HEK293 (cell line): ENCODE measurements at regions of chrX and their contacts with region 1.

Region 1: DNA sequence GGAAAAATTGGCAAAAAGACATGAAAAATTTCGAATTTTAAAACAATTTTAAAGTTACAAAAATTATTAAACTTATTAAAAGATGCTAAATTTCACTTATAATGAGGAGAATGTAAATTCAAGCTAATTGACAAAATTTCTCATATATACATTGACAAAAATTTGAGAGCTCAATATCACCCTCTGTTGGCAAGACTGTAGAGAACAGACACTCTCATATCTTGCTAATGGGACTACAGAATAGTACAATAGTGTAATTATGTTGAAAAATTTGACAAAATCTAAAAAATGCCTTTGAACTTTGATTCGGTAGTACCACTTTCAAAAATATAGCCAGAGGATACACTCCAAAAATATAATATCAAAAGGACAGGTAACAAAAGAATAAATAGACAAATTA is 29.8 kb downstream of the DCAF8L2 start:
- H3K4me3 ChIP-seq: no peak overlapping the region
- H3K27ac ChIP-seq: no peak overlapping the region
- H3K4me1 ChIP-seq: no peaks in the 10 kb centered on the region
- CTCF ChIP-seq: no peak

Region 2: DNA sequence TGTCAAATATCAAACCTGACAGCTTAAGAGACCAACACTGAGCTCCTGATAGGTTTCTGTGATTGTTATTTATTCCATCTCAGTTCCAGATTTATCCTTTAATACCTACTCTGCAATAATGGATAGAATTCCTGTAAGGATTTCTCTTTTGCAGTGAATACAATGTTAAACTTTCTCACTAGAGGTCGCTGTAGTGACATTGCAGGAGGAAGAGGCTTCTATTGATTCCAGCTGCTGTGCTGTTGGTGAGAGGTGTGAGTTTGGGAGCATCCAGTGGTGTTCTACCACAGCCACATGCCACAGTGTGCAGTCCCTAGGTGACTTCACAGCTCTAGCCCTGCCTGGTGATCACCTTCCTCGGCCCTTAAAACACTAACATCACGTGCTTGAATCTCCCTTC is 64.5 kb before region 1 on chrX:
- CTCF ChIA-PET with region 1: interaction called, 34 read pairs
- POLR2A ChIA-PET with region 1: no interaction called
- H3K4me3 ChIP-seq: no peak overlapping the region
- H3K27ac ChIP-seq: no peak overlapping the region
- H3K4me1 ChIP-seq: no peaks in the 10 kb centered on the region
- CTCF ChIP-seq: no peak

Region 3: GRCh38 chrX:27599928-27600327 is 20.0 kb before region 1 on chrX:
- CTCF ChIA-PET with region 1: interaction called, 11 read pairs
- POLR2A ChIA-PET with region 1: no interaction called
- H3K4me3 ChIP-seq: no peak overlapping the region
- H3K27ac ChIP-seq: no peak overlapping the region
- H3K4me1 ChIP-seq: no peaks in the 10 kb centered on the region
- CTCF ChIP-seq: no peak

Region 4: GRCh38 chrX:27842867-27843266 is 222.9 kb after region 1 on chrX:
- CTCF ChIA-PET with region 1: no interaction called
- POLR2A ChIA-PET with region 1: no interaction called
- H3K4me3 ChIP-seq: no peak overlapping the region
- H3K27ac ChIP-seq: no peak overlapping the region
- H3K4me1 ChIP-seq: no peaks in the 10 kb centered on the region
- CTCF ChIP-seq: no peak

Region 5: DNA sequence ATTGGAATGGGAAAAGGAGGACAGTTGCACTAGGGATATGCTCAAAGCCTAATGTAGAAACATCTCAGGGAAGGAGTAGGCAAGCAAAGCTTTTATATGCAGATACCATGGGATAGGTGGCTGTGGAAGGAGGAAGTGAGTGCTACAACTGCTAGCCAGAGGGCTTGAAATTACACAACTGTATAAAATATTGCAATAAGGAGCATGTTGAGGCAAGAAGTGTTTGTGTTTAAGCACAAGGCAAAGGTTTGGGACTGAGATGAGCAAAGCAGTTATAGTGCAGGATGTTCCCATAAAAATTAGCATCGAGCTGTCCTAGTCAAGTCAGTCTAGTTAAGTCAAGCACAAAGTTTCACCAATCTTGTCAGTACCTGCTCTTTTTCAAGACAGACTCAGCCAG is 396.8 kb after region 1 on chrX:
- CTCF ChIA-PET with region 1: no interaction called
- POLR2A ChIA-PET with region 1: no interaction called
- H3K4me3 ChIP-seq: no peak overlapping the region
- H3K27ac ChIP-seq: no peak overlapping the region
- H3K4me1 ChIP-seq: no peaks in the 10 kb centered on the region
- CTCF ChIP-seq: no peak